Naive thymus-derived CD4-positive, alpha-beta T cell (primary cell): ENCODE measurements at regions of chr11 and their contacts with region 1.

Region 1: GRCh38 chr11:46210133-46210636 is 67.3 kb upstream of the CREB3L1 start:
- DNase-seq: no peak
- ATAC-seq: peak; percentile 80
- H3K4me3 ChIP-seq: no peak overlapping the region
- H3K4me3 Mint-ChIP-seq: no peak overlapping the region
- H3K27ac ChIP-seq: no peak overlapping the region
- H3K27ac Mint-ChIP-seq: no peak overlapping the region
- H3K4me1 ChIP-seq: no peaks in the 10 kb centered on the region
- H3K4me1 Mint-ChIP-seq: peaks cover 0 to 13% (median 5%) of the 10 kb centered on the region in 7 donors
- H3K27me3 ChIP-seq: no peaks in the 10 kb centered on the region
- H3K27me3 Mint-ChIP-seq: peaks cover 0 to 10% (median 5%) of the 10 kb centered on the region in 5 donors

Region 2: GRCh38 chr11:46134540-46134939 is 75.6 kb before region 1 on chr11:
- CTCF ChIA-PET with region 1: no interaction called
- POLR2A ChIA-PET with region 1: no interaction called
- intact Hi-C with region 1: loop called in 1 of 2 experiments (anchors 2 kb)
- DNase-seq: no peak
- ATAC-seq: no peak
- H3K4me3 ChIP-seq: no peak overlapping the region
- H3K4me3 Mint-ChIP-seq: no peak overlapping the region
- H3K27ac ChIP-seq: no peak overlapping the region
- H3K27ac Mint-ChIP-seq: no peak overlapping the region
- H3K4me1 ChIP-seq: no peaks in the 10 kb centered on the region
- H3K4me1 Mint-ChIP-seq: no peaks in the 10 kb centered on the region
- H3K27me3 ChIP-seq: no peaks in the 10 kb centered on the region
- H3K27me3 Mint-ChIP-seq: peaks cover 0 to 32% (median 0%) of the 10 kb centered on the region in 5 donors

Region 3: GRCh38 chr11:46160100-46160499 is 50.1 kb before region 1 on chr11:
- CTCF ChIA-PET with region 1: no interaction called
- POLR2A ChIA-PET with region 1: no interaction called
- intact Hi-C with region 1: no loop called
- DNase-seq: no peak
- ATAC-seq: no peak
- H3K4me3 ChIP-seq: no peak overlapping the region
- H3K4me3 Mint-ChIP-seq: no peak overlapping the region
- H3K27ac ChIP-seq: no peak overlapping the region
- H3K27ac Mint-ChIP-seq: no peak overlapping the region
- H3K4me1 ChIP-seq: no peaks in the 10 kb centered on the region
- H3K4me1 Mint-ChIP-seq: no peaks in the 10 kb centered on the region
- H3K27me3 ChIP-seq: peaks cover 0 to 3% of the 10 kb centered on the region in 2 donors
- H3K27me3 Mint-ChIP-seq: peaks cover 34 to 40% (median 39%) of the 10 kb centered on the region in 5 donors